Pancreas (tissue), 10 donors: ENCODE measurements at regions of chr2 and their contacts with region 1.

Region 1: GRCh38 chr2:37402636-37403035 is 58.2 kb downstream of the QPCT start:
- DNase-seq: no peak
- ATAC-seq: no peak
- H3K4me3 ChIP-seq: no peak overlapping the region
- H3K27ac ChIP-seq: no peak overlapping the region
- H3K4me1 ChIP-seq: no peaks in the 10 kb centered on the region
- H3K27me3 ChIP-seq: no peaks in the 10 kb centered on the region
- CTCF ChIP-seq: no peak

Region 2: DNA sequence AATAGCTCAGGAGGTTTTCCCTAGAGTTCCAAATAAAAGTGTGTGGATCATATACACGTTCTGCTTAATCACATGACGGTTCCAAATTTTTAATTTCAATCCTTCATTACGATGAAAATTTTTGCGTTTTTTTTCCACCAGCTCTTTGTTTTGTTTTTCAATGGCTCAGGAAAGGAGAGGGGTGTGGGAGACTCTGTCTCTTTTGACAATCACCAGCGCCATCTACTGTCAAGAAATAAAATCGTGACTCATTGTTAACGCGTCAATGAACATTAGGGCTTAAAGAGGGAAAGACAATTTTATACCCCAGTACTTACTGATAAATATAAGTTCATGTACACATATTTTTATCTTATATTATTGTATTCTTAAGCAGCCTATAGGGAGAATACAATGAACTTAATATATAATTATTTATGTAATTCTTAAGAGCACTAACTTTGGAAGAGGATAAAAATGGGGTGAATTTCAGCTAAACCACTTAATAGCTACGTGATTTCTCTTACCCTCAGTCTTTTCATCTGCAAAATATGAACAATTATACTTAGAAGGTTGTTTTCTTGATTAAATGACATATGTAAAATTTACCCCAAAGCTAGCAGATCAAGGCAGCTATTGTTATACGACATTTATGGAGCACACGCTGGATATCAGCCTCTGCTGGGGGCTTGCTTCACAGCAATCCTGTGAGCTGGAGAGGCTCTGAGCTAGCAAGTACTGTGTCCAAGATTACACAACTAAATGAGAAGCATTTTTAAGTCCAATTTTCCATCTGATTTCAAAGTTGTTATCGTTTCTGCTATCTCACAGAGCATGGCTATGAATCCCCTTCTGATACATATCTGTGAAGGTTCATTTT is 475.1 kb after region 1 on chr2:
- intact Hi-C with region 1: loop called in 1 of 3 experiments (anchors 5 kb)
- DNase-seq: no peak
- ATAC-seq: peak; percentile 69 to 96 (median 90)
- H3K4me3 ChIP-seq: no peak overlapping the region
- H3K27ac ChIP-seq: no peak overlapping the region
- H3K4me1 ChIP-seq: no peaks in the 10 kb centered on the region
- H3K27me3 ChIP-seq: no peaks in the 10 kb centered on the region
- CTCF ChIP-seq: peak; percentile 41 to 73 (median 48)